HepG2 (cell line): ENCODE measurements at regions of chr19 and their contacts with region 1.

Region 1: DNA sequence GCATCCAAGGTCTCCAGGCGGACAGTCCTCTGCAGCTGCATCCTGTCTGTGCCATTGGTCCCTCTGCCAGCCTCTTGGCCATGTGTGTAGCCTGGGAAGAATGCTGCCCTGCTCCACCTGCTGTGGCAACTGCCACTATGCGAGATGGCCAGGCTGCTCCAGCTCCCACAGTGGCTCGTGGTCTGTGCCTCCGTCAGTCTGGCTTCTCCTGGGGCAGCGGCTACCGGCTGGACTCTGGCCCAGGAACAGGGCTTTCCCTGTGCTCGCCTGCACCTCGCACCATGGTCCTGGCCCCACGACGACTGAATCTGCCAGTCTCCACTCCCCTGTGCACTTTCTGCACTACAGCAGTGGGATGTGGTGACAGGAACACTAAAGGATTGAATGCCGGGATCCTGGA is 26.7 kb upstream of the FFAR2 start:
- DNase-seq: no peak
- ATAC-seq: peak; percentile 65
- H3K4me3 ChIP-seq: peak overlapping the region in 1 of 3 experiments; percentile 51; a peak in 1 of 6 replicates
- H3K27ac ChIP-seq: no peak overlapping the region
- H3K4me1 ChIP-seq: peaks cover 65% of the 10 kb centered on the region
- H3K27me3 ChIP-seq: no peaks in the 10 kb centered on the region
- CTCF ChIP-seq: no peak
- EP300 ChIP-seq: no peak
- POLR2A ChIP-seq: no peak
- RAD21 ChIP-seq: no peak

Region 2: GRCh38 chr19:35458731-35459391 is 37.5 kb after region 1 on chr19:
- CTCF ChIA-PET with region 1: no interaction called
- POLR2A ChIA-PET with region 1: interaction called, 7 read pairs
- in situ Hi-C with region 1: no loop called
- intact Hi-C with region 1: loop called (anchors 2 kb)
- DNase-seq: peak; percentile 92
- ATAC-seq: peak; percentile 95
- H3K4me3 ChIP-seq: peak overlapping the region; percentile 35 to 66 (median 60); a peak in 5 of 6 replicates
- H3K27ac ChIP-seq: peak overlapping the region; percentile 87
- H3K4me1 ChIP-seq: peaks cover 81% of the 10 kb centered on the region
- H3K27me3 ChIP-seq: no peaks in the 10 kb centered on the region; a peak in 1 of 5 replicates
- CTCF ChIP-seq: no peak
- EP300 ChIP-seq: peak in 1 of 2 experiments; percentile 78; a peak in 2 of 4 replicates
- POLR2A ChIP-seq: peak; percentile 15 to 51; a peak in 2 of 4 replicates
- RAD21 ChIP-seq: no peak

Region 3: DNA sequence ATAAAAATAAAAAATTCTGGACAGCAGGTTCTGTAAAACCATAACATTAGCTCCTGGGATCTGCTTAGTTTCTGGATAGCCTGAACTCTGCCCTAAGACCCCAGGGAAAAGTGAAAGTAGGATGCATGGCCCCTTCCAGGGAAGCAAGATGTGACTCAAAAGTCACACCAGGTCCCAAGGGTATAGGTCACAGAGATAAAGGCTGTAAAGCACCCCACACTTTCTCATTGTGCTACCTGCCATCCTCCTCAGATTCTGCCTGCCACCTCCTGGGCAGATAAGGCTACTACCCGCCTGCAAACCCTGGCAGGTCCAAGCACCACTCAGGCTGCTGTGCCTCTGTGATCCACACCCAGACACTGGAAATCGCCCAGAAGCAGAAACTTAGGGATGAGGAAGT is 47.3 kb after region 1 on chr19:
- CTCF ChIA-PET with region 1: no interaction called
- POLR2A ChIA-PET with region 1: no interaction called
- in situ Hi-C with region 1: no loop called
- intact Hi-C with region 1: loop called (anchors 1 kb)
- DNase-seq: peak; percentile 54
- ATAC-seq: peak; percentile 98
- H3K4me3 ChIP-seq: no peak overlapping the region
- H3K27ac ChIP-seq: no peak overlapping the region
- H3K4me1 ChIP-seq: peaks cover 61% of the 10 kb centered on the region
- H3K27me3 ChIP-seq: no peaks in the 10 kb centered on the region
- CTCF ChIP-seq: peak; percentile 94
- EP300 ChIP-seq: no peak
- POLR2A ChIP-seq: no peak
- RAD21 ChIP-seq: peak; percentile 92

Region 4: DNA sequence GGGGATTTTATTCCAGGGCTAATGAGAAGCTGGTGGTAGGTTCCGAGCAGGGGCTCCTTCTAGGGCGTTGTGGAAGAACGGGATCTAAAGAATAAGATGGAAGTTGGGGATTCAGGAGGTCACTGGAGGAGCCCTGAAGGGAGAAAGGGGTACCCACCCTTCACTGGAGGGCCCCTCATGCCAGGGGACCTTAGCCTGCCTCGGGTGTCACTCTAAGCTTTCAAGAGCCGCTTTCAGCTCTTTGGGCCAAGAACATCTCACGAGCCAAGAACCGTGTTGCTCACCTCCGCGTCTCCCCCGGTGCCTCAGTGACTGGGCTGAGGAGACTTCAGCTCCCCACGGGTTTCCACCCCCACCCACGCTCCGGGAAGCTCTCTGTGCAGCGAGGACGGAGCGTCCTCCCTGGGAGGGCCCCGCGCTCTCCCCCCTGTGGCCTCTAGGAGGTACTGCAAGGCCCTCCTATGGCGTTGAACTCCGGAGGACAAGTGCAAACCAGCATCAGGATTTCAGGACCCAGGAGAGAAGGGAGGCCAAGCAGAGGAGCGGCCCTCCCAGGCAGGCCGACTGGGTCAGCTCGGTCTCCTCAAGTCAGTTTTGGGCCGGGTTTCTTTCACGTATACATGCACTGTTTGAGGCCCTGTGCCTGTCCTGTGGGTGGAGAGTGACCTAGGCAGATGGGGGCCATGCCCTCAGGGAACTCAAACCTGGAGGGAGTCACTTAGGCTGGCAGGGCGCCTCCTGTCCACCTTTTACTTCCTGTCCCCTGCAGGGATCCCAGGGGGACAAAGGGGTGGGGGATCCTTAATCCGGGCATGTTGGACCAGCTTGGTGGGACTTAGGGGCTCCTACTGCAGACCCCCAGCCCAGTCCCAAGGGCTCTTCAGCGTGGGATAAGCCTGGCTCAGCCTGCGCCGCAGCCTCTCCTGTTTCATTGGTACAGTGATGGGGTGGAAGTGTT is 74.0 kb after region 1 on chr19:
- CTCF ChIA-PET with region 1: interaction called, 5 read pairs
- POLR2A ChIA-PET with region 1: interaction called, 5 read pairs
- in situ Hi-C with region 1: no loop called
- intact Hi-C with region 1: loop called (anchors 1 kb)
- DNase-seq: peak; percentile 54
- ATAC-seq: peak; percentile 93
- H3K4me3 ChIP-seq: peak overlapping the region; percentile 25 to 66 (median 44); a peak in 4 of 6 replicates
- H3K27ac ChIP-seq: no peak overlapping the region
- H3K4me1 ChIP-seq: peaks cover 15% of the 10 kb centered on the region
- H3K27me3 ChIP-seq: no peaks in the 10 kb centered on the region
- CTCF ChIP-seq: peak; percentile 98
- EP300 ChIP-seq: no peak
- POLR2A ChIP-seq: no peak
- RAD21 ChIP-seq: peak; percentile 91